ENCODE measurements at regions of chr2 and their contacts with region 1.

Region 1: DNA sequence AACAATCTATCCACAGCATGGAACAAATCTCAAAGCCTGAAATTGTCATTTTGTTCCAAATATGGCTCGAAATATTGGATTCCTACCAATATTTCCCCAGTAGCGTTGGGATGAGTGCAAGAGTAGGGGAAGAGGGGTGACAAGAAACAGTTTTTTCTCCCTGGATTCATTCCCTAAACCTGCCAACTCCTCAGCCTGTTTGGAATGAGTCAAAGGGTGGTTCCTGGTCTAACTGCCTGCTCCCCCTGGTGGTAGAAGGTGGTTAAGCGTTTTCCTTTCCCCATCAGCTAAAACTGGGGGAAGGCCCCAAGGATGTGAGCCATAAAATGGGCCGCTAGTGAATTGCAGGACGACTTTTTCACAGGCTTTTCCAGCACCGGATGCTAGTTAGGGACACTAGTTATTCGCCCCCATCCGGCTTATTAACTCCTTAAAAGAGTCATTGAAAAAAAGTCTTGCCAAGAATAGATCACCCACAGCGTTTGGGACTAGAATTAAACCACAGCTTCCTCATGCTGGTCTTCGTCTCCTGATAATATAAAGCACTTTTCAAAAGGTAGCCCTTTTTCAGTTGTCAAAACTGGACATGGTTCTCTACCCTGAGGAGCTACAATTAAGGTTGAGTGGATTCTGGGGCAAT is 72.5 kb downstream of the DHRS9 start:
- DNase-seq: peak; percentile 58
- H3K4me3 ChIP-seq: no peak overlapping the region
- H3K27ac ChIP-seq: no peak overlapping the region
- H3K4me1 ChIP-seq: peaks cover 3% of the 10 kb centered on the region
- H3K27me3 ChIP-seq: no peaks in the 10 kb centered on the region
- CTCF ChIP-seq: peak; percentile 85 to 90
- POLR2A ChIP-seq: no peak

Region 2: DNA sequence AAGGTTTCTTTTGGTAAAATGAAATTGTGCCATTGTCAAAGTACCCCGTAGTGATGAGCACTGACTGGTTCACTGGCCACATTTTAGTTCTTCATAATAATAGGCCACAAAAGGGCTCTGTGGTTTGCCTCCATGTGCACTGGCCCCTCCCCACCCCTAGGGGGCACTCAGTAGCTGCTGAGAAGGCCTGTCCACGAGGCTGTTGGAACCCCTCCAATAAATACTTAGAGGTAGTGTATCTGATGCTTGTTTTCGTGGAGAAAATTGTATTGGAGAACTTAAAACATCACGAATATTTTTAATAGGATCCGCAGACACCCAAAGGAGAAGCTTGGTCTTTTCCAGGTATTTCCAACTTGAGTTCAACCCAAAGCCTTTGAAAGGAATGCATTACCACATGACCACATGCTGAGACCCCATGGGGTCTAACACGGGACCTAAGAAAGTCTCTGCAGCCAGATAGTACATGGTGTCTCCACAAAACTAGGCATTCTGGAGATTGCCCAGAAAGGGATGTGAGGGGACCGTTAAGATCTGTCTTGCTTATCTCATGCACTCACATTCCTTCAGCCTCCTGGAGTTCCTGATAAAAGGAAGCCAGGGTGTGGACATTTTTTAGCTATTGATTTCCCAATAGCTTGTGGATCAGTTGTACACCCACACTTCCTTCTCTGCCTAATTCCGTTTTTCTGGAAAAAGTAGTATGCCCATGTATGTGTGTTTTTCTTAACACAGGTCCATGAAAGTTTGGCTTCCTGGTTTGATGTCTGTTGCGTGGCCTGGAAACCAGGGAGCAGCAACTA is 367.9 kb before region 1 on chr2:
- CTCF ChIA-PET with region 1: no interaction called
- POLR2A ChIA-PET with region 1: no interaction called
- dilution Hi-C with region 1: no loop called
- intact Hi-C with region 1: loop called (anchors 5 kb)
- DNase-seq: peak; percentile 82
- H3K4me3 ChIP-seq: no peak overlapping the region
- H3K27ac ChIP-seq: no peak overlapping the region
- H3K4me1 ChIP-seq: peaks cover 4% of the 10 kb centered on the region
- H3K27me3 ChIP-seq: no peaks in the 10 kb centered on the region
- CTCF ChIP-seq: peak; percentile 93 to 96
- POLR2A ChIP-seq: no peak

Region 3: GRCh38 chr2:168948621-168949212 is 193.1 kb before region 1 on chr2:
- CTCF ChIA-PET with region 1: interaction called, 9 read pairs
- POLR2A ChIA-PET with region 1: no interaction called
- dilution Hi-C with region 1: no loop called
- intact Hi-C with region 1: loop called (anchors 1 kb)
- DNase-seq: peak; percentile 31
- H3K4me3 ChIP-seq: no peak overlapping the region
- H3K27ac ChIP-seq: no peak overlapping the region
- H3K4me1 ChIP-seq: no peaks in the 10 kb centered on the region
- H3K27me3 ChIP-seq: no peaks in the 10 kb centered on the region
- CTCF ChIP-seq: peak; percentile 55 to 58
- POLR2A ChIP-seq: no peak

Region 4: GRCh38 chr2:168961450-168962229 is 180.2 kb before region 1 on chr2:
- CTCF ChIA-PET with region 1: interaction called, 15 read pairs
- POLR2A ChIA-PET with region 1: no interaction called
- dilution Hi-C with region 1: no loop called
- intact Hi-C with region 1: loop called (anchors 1 kb)
- DNase-seq: peak; percentile 89
- H3K4me3 ChIP-seq: no peak overlapping the region
- H3K27ac ChIP-seq: no peak overlapping the region
- H3K4me1 ChIP-seq: peaks cover 5% of the 10 kb centered on the region
- H3K27me3 ChIP-seq: no peaks in the 10 kb centered on the region
- CTCF ChIP-seq: peak; percentile 63 to 68
- POLR2A ChIP-seq: no peak

Region 5: GRCh38 chr2:169173876-169174275 is 32.0 kb after region 1 on chr2:
- CTCF ChIA-PET with region 1: interaction called, 7 read pairs
- POLR2A ChIA-PET with region 1: no interaction called
- dilution Hi-C with region 1: no loop called
- intact Hi-C with region 1: loop called (anchors 2 kb)
- DNase-seq: no peak
- H3K4me3 ChIP-seq: no peak overlapping the region
- H3K27ac ChIP-seq: no peak overlapping the region
- H3K4me1 ChIP-seq: no peaks in the 10 kb centered on the region
- H3K27me3 ChIP-seq: peaks cover 8 to 11% of the 10 kb centered on the region in 2 experiments
- CTCF ChIP-seq: no peak
- POLR2A ChIP-seq: no peak

Region 6: GRCh38 chr2:169237286-169237685 is 95.5 kb after region 1 on chr2:
- CTCF ChIA-PET with region 1: no interaction called
- POLR2A ChIA-PET with region 1: no interaction called
- dilution Hi-C with region 1: no loop called
- intact Hi-C with region 1: no loop called
- DNase-seq: no peak
- H3K4me3 ChIP-seq: no peak overlapping the region
- H3K27ac ChIP-seq: no peak overlapping the region
- H3K4me1 ChIP-seq: no peaks in the 10 kb centered on the region
- H3K27me3 ChIP-seq: peaks cover 2 to 6% of the 10 kb centered on the region in 2 experiments
- CTCF ChIP-seq: no peak
- POLR2A ChIP-seq: no peak

Region 7: DNA sequence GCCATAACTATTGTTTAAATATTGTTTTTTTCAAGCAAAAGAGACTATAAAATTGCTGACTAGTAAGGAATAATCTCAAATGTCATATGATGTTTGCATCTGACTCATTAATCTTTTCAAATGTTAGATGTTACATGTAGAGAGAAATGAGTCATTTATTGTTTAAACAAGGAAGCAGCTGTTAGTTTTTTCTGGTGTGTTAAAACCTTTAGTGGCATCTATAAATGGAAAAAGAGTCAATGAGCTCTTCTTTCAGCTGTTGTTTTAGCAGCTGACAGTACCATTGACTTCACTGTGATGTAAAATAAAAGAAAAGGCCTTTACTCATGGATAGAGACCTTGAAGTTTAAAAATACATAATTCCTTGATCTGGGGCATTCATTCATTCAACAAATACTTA is 365.9 kb after region 1 on chr2:
- CTCF ChIA-PET with region 1: no interaction called
- POLR2A ChIA-PET with region 1: no interaction called
- dilution Hi-C with region 1: no loop called
- intact Hi-C with region 1: no loop called
- DNase-seq: peak; percentile 86
- H3K4me3 ChIP-seq: no peak overlapping the region
- H3K27ac ChIP-seq: peak overlapping the region; percentile 77
- H3K4me1 ChIP-seq: peaks cover 13% of the 10 kb centered on the region
- H3K27me3 ChIP-seq: no peaks in the 10 kb centered on the region
- CTCF ChIP-seq: no peak
- POLR2A ChIP-seq: no peak